ENCODE measurements at regions of chr10 and their contacts with region 1.

Region 1: GRCh38 chr10:96061232-96061631 is 17.8 kb downstream of the CCNJ start:
- DNase-seq: no peak
- H3K4me3 Mint-ChIP-seq: no peak overlapping the region
- H3K27ac Mint-ChIP-seq: no peak overlapping the region
- H3K4me1 Mint-ChIP-seq: peaks cover 37% of the 10 kb centered on the region
- H3K27me3 Mint-ChIP-seq: no peaks in the 10 kb centered on the region

Region 2: DNA sequence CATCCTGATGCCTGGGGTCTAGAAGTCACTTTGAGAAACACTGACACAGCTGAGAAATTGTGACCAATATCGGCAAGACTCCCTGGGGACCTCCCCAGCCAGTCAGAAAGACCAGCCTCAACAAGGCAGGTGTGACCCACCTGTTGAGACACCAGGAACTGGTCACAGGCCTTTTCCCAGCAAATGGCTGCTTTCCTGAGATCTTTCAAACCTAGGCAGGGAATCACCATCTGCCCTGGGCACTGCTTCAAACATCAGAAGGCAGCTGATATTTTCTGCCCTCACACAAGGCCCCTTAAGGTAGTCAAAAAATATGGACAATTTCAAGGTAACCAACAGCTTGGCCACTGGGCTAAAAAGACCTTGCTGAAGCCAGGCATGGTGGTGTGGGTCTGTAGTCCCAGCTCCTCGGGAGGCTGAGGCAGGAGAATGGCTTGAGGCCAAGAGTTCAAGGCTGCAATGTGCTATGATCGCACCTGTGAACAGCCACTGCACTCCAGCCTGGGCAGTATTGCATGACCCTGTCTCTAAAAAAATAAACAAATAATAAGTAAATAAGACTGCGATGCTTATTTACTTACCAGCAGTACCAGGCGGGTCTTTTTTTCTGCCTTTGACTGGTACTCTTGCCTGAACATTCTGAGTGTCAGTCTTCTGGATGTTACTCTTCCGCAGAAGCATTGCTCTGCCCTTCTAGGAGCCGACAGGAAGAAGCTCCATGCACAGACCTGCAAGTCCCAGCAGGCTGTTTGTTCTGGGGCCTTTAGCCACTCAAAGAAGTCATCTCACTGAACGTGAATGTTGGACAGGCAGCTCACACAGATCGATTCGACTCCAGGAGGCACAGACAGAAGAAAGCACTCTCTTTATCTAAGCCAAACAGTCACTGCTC is 559.8 kb before region 1 on chr10:
- intact Hi-C with region 1: no loop called
- DNase-seq: no peak
- H3K4me3 Mint-ChIP-seq: no peak overlapping the region
- H3K27ac Mint-ChIP-seq: no peak overlapping the region
- H3K4me1 Mint-ChIP-seq: peaks cover 4% of the 10 kb centered on the region
- H3K27me3 Mint-ChIP-seq: peaks cover 20% of the 10 kb centered on the region

Region 3: DNA sequence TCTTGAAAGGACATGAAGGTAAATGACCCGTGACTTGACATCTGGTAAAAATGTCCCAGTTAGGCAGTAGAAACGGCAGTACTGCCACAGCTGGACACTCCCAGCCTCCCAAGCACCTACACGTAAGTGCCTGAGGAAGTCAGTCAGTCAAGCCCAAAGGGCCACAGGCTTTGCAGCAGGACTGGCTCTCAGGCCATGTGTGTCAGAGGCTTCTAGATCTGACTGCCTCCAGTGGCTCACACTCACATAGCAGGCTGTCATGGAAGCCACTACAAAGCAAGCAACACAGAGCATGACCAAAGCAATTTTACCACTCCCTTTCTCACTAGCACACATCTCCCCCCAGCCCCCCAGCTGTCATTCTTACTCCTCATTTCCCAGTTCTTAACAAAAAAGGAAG is 35.7 kb before region 1 on chr10:
- intact Hi-C with region 1: no loop called
- DNase-seq: no peak
- H3K4me3 Mint-ChIP-seq: no peak overlapping the region
- H3K27ac Mint-ChIP-seq: no peak overlapping the region
- H3K4me1 Mint-ChIP-seq: no peaks in the 10 kb centered on the region
- H3K27me3 Mint-ChIP-seq: peaks cover 13% of the 10 kb centered on the region

Region 4: GRCh38 chr10:96073722-96074121 is 12.5 kb after region 1 on chr10:
- intact Hi-C with region 1: loop called (anchors 1 kb)
- DNase-seq: peak; percentile 8
- H3K4me3 Mint-ChIP-seq: peak overlapping the region; percentile 2
- H3K27ac Mint-ChIP-seq: peak overlapping the region; percentile 7
- H3K4me1 Mint-ChIP-seq: peaks cover 35% of the 10 kb centered on the region
- H3K27me3 Mint-ChIP-seq: no peaks in the 10 kb centered on the region

Region 5: DNA sequence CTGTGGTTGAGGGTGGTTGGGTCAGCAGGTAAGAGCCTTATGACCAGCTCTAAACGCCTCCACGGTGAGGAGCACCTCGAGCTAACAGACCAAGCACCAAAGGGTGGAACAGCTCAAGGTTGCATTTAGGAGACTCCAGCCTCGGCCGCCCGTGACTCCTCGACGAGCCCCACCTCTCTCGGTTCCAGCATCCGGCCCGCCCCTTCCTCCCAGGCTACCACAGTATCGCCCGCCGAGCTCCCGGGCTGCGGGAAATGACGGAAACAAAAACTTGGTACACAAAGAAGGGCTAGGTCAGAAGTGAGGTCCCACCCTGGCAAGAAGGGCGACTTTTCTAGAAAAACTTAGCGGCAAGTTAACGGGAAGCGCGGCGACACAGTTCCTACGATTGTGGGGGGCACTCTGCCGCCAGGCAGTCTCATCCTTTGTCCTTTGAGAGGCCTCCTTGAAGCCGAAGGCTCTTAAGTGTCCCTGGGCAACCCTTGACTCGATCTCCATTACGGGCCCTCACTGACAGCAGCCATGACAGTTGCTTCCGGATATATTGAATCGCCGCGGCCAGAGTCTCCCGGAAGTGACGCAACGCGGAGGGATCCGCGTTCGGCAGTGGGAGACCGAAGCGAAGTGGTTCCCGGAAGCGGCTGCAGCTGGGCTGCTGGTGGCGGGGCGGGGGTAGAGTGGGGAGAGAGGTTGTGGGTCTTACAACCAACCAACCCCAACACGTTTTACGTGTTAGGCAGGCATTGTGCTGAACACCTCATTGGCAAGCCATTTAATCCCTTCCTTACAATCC is 28.6 kb after region 1 on chr10:
- intact Hi-C with region 1: loop called (anchors 1 kb)
- DNase-seq: peak; percentile 87
- H3K4me3 Mint-ChIP-seq: peak overlapping the region; percentile 90
- H3K27ac Mint-ChIP-seq: peak overlapping the region; percentile 93
- H3K4me1 Mint-ChIP-seq: peaks cover 14% of the 10 kb centered on the region
- H3K27me3 Mint-ChIP-seq: peaks cover 18% of the 10 kb centered on the region

Region 6: DNA sequence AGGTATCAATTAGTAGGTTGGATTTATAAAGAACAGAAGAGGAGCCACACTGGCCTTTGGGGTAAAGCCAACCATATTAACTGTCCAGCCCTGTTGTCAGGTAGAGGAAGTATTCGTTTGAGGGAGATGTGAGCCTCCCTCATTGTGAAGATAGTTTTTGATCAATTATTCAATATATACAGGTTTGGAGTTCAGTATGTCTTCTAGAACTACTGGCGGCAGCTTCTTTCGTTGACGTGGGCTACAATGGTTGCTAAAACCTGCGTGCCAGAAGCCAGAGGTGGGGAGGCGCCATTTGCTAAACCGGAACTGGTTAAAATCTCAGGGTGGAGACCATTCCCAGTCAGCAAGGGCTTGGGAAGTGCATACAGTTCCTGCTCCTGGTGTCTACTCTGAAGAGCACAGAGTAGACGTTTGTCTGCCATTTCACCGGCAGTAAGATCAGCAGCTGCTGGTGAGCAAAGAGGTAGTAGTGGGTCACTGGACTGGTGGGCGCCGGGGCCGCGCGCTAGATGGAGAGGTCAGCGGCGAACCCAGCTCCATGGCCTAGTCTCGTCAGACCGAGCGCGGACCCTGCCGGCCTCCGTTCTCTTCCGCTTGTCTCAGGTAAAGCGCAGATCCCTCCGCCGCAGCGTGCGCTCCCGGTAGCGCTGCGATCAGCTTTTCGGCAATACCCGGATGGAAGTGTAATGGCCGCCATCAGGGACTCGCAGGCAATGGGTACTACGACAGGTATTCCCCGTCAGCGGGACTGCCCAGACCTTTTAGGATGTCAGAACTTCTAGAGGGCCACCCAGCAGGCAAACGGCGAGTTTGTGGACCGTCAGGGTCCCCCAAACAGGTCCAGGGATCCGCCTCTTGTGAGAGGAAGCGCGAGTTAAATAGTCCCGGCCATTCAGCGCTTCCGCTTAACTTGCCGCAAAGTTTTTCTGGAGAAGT is 68.4 kb after region 1 on chr10 and contains the start of gene ZNF518A:
- intact Hi-C with region 1: loop called (anchors 1 kb)
- DNase-seq: peak; percentile 86
- H3K4me3 Mint-ChIP-seq: peak within 1 kb of the TSS; percentile 90
- H3K27ac Mint-ChIP-seq: peak within 1 kb of the TSS; percentile 99
- H3K4me1 Mint-ChIP-seq: peaks cover 33% of the 10 kb centered on the region
- H3K27me3 Mint-ChIP-seq: peaks cover 27% of the 10 kb centered on the region
- total RNA-seq, gene ZNF518A: 14.3 and 16.2 TPM in 2 replicates

Region 7: DNA sequence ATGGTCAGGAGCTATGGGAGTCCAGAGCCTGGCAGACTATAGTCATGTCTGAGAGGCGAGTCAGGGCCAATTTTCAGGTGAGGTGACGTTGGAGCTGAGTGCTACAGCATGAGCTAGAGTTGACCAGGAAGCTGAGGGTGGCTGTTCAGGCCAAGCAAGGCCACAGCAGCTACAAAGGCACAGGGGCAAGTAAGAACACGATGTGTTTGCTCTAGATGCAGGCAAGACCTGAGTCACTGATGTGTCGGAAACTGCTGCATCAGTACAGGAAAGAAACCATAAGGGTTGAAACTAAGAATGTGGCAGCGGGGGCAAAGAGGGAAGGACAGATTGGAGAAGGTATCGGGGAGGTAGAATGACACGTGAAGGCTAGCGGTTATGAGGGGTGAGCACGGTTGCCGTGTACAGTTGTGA is 1351.7 kb after region 1 on chr10:
- intact Hi-C with region 1: loop called (anchors 5 kb)
- DNase-seq: peak; percentile 52
- H3K4me3 Mint-ChIP-seq: peak overlapping the region; percentile 47
- H3K27ac Mint-ChIP-seq: peak overlapping the region; percentile 95
- H3K4me1 Mint-ChIP-seq: peaks cover 55% of the 10 kb centered on the region
- H3K27me3 Mint-ChIP-seq: no peaks in the 10 kb centered on the region

Measured in activated T-helper 1 cell treated with anti-CD3 and anti-CD28 coated beads, Interleukin-12 subunit alpha, Interleukin-12 subunit beta, Interleukin-2, Interleukin-4 antibody, amounts not matched to agents 30 ng/mL and 10 ng/mL and 1 ng/mL, durations not matched to agents 14 hours and 24 hours and 36 hours (primary cell).